Endothelial cell of umbilical vein (primary cell): ENCODE measurements at regions of chr2 and their contacts with region 1.

Region 1: GRCh38 chr2:215931256-215931903 is 82.0 kb downstream of the MREG start:
- DNase-seq: peak; percentile 82
- H3K4me3 ChIP-seq: no peak overlapping the region
- H3K27ac ChIP-seq: no peak overlapping the region
- H3K4me1 ChIP-seq: no peaks in the 10 kb centered on the region
- H3K27me3 ChIP-seq: peaks cover 0 to 2% of the 10 kb centered on the region in 2 experiments
- CTCF ChIP-seq: peak; percentile 84 to 88
- POLR2A ChIP-seq: no peak

Region 2: GRCh38 chr2:214809751-214810564 is 1121.4 kb before region 1 on chr2:
- CTCF ChIA-PET with region 1: no interaction called
- POLR2A ChIA-PET with region 1: no interaction called
- dilution Hi-C with region 1: no loop called
- intact Hi-C with region 1: loop called (anchors 10 kb)
- DNase-seq: peak; percentile 100
- H3K4me3 ChIP-seq: peak overlapping the region; percentile 71 to 87 (median 85)
- H3K27ac ChIP-seq: peak overlapping the region; percentile 55
- H3K4me1 ChIP-seq: peaks cover 30% of the 10 kb centered on the region
- H3K27me3 ChIP-seq: peaks cover 0 to 6% of the 10 kb centered on the region in 2 experiments
- CTCF ChIP-seq: no peak
- POLR2A ChIP-seq: no peak

Region 3: DNA sequence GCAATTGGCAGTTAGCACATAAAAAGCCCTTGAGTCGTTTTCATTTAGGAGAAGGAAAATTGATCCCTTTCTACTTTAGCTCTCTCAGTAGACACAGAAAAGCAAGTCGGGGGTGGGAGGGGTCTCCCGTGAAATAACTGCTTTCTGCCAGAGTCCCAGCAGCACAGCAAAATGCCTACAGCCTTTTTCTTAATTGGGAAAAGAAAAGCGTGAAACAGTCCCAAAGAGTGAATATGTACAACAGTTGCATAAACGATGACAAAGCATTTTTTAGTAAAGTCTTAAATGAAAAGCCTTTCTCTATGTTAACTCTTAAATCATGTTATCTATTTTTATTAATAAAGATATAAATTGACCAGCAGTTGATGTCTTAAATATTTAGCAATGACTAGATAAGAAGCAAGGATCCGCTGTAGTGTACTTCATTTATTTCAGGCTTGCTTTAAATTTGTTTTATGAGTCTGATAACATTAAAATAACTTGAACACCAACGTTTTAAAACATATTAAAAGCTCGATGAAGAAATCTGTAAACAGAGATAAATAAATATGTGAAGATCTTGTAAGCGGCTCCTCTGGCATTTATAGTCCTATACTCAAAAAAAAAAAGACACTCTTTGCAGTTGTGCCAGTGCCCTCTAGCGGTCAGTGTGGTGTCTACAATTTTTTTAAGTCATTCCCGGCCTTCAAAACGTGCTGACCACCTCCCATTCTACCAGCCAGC is 661.8 kb before region 1 on chr2:
- CTCF ChIA-PET with region 1: interaction called, 3 read pairs
- POLR2A ChIA-PET with region 1: no interaction called
- dilution Hi-C with region 1: no loop called
- intact Hi-C with region 1: loop called (anchors 2 kb)
- DNase-seq: peak; percentile 77
- H3K4me3 ChIP-seq: no peak overlapping the region
- H3K27ac ChIP-seq: no peak overlapping the region
- H3K4me1 ChIP-seq: no peaks in the 10 kb centered on the region
- H3K27me3 ChIP-seq: no peaks in the 10 kb centered on the region
- CTCF ChIP-seq: peak; percentile 73 to 75
- POLR2A ChIP-seq: no peak

Region 4: DNA sequence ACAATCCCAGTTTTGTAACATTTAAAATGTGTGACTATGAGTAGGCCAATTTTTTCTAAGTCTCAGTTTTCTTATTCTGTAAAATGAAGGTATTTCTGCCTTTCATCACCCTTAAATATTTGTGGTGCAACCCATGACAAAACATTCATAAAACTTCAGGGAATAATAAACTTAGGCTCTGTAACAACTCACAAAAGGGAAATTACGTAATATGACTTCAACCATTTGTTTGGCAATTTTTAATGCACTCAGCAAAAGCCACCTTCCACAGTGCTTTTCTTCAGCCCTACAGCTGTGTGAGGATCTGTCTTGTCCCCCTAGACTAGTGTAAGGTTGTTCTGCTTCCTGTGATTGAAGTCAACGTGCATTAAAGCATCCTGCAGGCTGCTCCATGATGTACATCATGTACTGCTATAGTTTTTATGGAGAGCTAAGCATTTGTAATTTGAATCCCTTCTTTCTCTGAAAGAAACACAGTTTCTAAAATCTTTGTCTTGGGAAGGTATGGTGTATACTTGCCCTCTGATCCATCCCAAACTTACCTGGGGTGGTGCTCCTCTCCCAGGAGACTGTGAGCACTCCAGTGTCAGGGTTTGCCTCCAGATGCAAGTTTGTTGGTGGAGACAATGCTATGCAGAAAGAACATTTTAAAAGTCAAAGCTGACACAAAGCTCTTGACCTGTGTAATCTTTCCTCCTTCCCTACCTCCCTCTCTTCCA is 534.6 kb before region 1 on chr2:
- CTCF ChIA-PET with region 1: interaction called, 33 read pairs
- POLR2A ChIA-PET with region 1: no interaction called
- dilution Hi-C with region 1: no loop called
- intact Hi-C with region 1: no loop called
- DNase-seq: no peak
- H3K4me3 ChIP-seq: no peak overlapping the region
- H3K27ac ChIP-seq: no peak overlapping the region
- H3K4me1 ChIP-seq: peaks cover 20% of the 10 kb centered on the region
- H3K27me3 ChIP-seq: no peaks in the 10 kb centered on the region
- CTCF ChIP-seq: no peak
- POLR2A ChIP-seq: no peak

Region 5: DNA sequence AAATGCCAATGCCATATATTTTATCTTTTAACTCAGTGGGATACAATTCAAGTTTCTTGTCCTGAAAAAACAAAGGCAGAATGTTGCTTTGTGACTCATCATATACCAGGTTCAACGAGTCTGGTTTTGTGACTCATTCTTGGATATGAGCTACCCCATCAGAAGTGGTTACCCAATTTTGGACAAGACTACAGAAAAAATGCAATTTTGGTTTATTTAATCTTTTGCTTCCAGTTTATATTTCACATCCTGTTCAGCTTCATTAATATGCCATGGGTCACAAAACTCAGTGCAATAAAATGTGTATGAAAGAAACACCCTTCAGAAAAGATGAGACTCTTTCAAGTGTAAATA is 520.5 kb before region 1 on chr2:
- CTCF ChIA-PET with region 1: interaction called, 30 read pairs
- POLR2A ChIA-PET with region 1: interaction called, 4 read pairs
- dilution Hi-C with region 1: no loop called
- intact Hi-C with region 1: no loop called
- DNase-seq: peak; percentile 89
- H3K4me3 ChIP-seq: no peak overlapping the region
- H3K27ac ChIP-seq: peak overlapping the region; percentile 50
- H3K4me1 ChIP-seq: peaks cover 34% of the 10 kb centered on the region
- H3K27me3 ChIP-seq: no peaks in the 10 kb centered on the region
- CTCF ChIP-seq: no peak
- POLR2A ChIP-seq: no peak

Region 6: GRCh38 chr2:215454519-215455246 is 476.7 kb before region 1 on chr2:
- CTCF ChIA-PET with region 1: interaction called, 5 read pairs
- POLR2A ChIA-PET with region 1: no interaction called
- dilution Hi-C with region 1: no loop called
- intact Hi-C with region 1: loop called (anchors 1 kb)
- DNase-seq: peak; percentile 73
- H3K4me3 ChIP-seq: no peak overlapping the region
- H3K27ac ChIP-seq: no peak overlapping the region
- H3K4me1 ChIP-seq: peaks cover 2% of the 10 kb centered on the region
- H3K27me3 ChIP-seq: no peaks in the 10 kb centered on the region
- CTCF ChIP-seq: peak; percentile 69
- POLR2A ChIP-seq: no peak

Region 7: GRCh38 chr2:215920244-215921100 is 10.9 kb before region 1 on chr2:
- CTCF ChIA-PET with region 1: interaction called, 19 read pairs
- POLR2A ChIA-PET with region 1: no interaction called
- dilution Hi-C with region 1: no loop called
- intact Hi-C with region 1: no loop called
- DNase-seq: peak; percentile 87
- H3K4me3 ChIP-seq: no peak overlapping the region
- H3K27ac ChIP-seq: no peak overlapping the region
- H3K4me1 ChIP-seq: peaks cover 12% of the 10 kb centered on the region
- H3K27me3 ChIP-seq: no peaks in the 10 kb centered on the region
- CTCF ChIP-seq: peak; percentile 76 to 93
- POLR2A ChIP-seq: no peak

Region 8: GRCh38 chr2:215983581-215984351 is 52.4 kb after region 1 on chr2:
- CTCF ChIA-PET with region 1: no interaction called
- POLR2A ChIA-PET with region 1: no interaction called
- dilution Hi-C with region 1: no loop called
- intact Hi-C with region 1: no loop called
- DNase-seq: no peak
- H3K4me3 ChIP-seq: no peak overlapping the region
- H3K27ac ChIP-seq: no peak overlapping the region
- H3K4me1 ChIP-seq: no peaks in the 10 kb centered on the region
- H3K27me3 ChIP-seq: no peaks in the 10 kb centered on the region
- CTCF ChIP-seq: no peak
- POLR2A ChIP-seq: no peak